ENCODE measurements at regions of chr2 and their contacts with region 1.

Region 1: DNA sequence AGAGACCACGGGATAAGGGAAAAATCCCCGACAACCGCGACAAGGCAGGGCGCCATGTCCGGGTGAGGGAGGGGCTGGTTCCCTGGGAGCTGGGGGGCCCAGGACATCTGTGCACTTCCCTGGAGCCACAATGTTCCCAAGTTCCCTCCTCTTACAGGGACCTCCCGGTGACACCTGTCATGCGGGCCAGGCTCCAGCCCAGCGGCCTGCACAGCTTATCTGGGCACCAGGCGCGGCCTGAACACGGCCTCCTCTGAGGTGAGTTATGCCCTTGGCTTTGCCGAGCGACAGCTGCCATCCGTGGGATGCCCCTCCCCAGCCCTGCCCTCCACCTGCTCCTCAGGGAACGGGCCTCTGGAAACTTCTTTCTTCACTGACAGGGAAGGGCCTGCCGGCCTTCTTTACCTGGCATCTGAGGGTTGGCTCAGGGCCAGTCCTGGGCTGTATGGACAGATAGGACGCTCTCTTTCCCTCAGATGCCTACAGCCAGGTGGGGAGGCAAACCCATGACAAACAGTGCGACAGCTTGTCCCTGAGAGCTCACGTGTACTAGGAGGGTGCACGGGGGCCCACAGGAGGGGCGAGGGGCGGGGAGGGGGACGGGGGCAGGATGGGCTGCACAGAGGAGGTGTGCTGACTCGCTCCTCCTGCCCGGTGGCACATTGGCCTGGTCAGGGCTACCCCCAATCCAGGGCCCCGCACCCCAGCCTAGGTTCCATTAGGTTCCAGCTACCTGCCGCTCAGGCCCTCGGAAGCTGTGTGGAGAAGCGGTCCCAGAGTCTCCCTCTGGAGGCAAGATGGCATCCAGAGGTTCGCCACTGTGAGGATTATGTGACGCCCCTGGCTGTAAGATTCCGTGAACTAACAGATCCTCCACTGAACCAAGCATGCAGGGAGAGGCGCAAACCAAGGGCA is 34.9 kb upstream of the HPCAL1 start:
- DNase-seq: no peak
- H3K4me3 ChIP-seq: no peak overlapping the region
- H3K27ac ChIP-seq: no peak overlapping the region
- H3K4me1 ChIP-seq: peaks cover 0 to 10% (median 8%) of the 10 kb centered on the region in 4 experiments
- H3K27me3 ChIP-seq: no peaks in the 10 kb centered on the region

Region 2: GRCh38 chr2:10278029-10278762 is 10.4 kb after region 1 on chr2:
- CTCF ChIA-PET with region 1: interaction called, 15 read pairs
- POLR2A ChIA-PET with region 1: no interaction called
- DNase-seq: peak in 2 of 3 donors; percentile 29 to 37
- H3K4me3 ChIP-seq: no peak overlapping the region
- H3K27ac ChIP-seq: peak overlapping the region in 1 of 2 experiments; percentile 61
- H3K4me1 ChIP-seq: peaks cover 0 to 20% (median 2%) of the 10 kb centered on the region in 4 experiments
- H3K27me3 ChIP-seq: no peaks in the 10 kb centered on the region

Region 3: GRCh38 chr2:10285556-10286198 is 17.9 kb after region 1 on chr2:
- CTCF ChIA-PET with region 1: interaction called, 15 read pairs
- POLR2A ChIA-PET with region 1: no interaction called
- DNase-seq: peak in 2 of 3 donors; percentile 71 to 78
- H3K4me3 ChIP-seq: peak overlapping the region in 3 of 7 experiments; percentile 6 to 23 (median 19)
- H3K27ac ChIP-seq: no peak overlapping the region
- H3K4me1 ChIP-seq: peaks cover 0 to 50% (median 28%) of the 10 kb centered on the region in 4 experiments
- H3K27me3 ChIP-seq: no peaks in the 10 kb centered on the region

Region 4: DNA sequence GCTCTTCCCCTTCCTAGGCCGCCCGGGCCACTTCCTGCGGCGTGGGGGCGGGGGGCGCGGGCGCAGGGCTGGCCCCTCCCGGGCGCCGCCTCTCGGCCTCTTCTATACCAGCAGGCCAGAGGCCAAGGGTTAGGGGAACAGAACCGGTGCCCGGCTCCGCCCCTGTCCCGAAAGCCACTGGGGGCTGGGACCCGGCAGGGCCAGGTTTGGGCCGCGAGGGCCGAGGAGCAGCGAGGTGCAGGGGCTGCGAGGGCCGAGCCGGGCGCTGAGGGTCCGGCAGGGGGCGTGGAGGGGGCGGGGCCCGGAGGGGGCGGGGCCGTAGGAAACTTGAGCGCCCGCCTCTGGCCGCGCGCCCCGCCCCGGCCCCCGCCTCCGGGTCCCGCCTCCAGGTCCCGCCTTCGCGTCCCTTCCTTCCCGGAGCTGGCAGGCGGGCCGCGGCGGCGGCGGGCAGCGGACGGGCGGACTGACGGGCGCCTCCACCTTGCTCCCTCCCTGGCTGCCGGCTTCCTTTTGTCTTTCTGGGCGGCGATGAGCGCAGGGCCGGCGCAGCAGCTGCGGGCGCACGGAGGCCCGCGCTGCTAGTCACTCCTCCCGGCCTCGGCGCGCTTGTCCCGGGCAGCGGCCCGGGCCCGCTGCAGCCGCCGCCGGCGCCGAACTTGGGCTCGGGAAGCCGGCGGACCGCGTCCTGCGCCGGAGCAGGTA is 34.8 kb after region 1 on chr2 and contains the start of gene HPCAL1:
- CTCF ChIA-PET with region 1: interaction called, 30 read pairs
- POLR2A ChIA-PET with region 1: no interaction called
- DNase-seq: peak; percentile 78 to 88 (median 84)
- H3K4me3 ChIP-seq: peak within 1 kb of the TSS; percentile 78 to 96 (median 91)
- H3K27ac ChIP-seq: peak within 1 kb of the TSS in 1 of 2 experiments; percentile 68
- H3K4me1 ChIP-seq: peaks cover 13 to 70% (median 65%) of the 10 kb centered on the region in 4 experiments
- H3K27me3 ChIP-seq: no peaks in the 10 kb centered on the region